ENCODE measurements at regions of chr2 and their contacts with region 1.

Region 1: GRCh38 chr2:184993746-184994145 is 395.4 kb downstream of the ZNF804A start:
- DNase-seq: no peak
- H3K4me3 Mint-ChIP-seq: no peak overlapping the region
- H3K27ac Mint-ChIP-seq: no peak overlapping the region
- H3K4me1 Mint-ChIP-seq: no peaks in the 10 kb centered on the region
- H3K27me3 Mint-ChIP-seq: no peaks in the 10 kb centered on the region
- CTCF ChIP-seq: no peak

Region 2: GRCh38 chr2:183604065-183604464 is 1389.7 kb before region 1 on chr2:
- CTCF ChIA-PET with region 1: no interaction called
- intact Hi-C with region 1: no loop called
- DNase-seq: no peak
- H3K4me3 Mint-ChIP-seq: no peak overlapping the region
- H3K27ac Mint-ChIP-seq: no peak overlapping the region
- H3K4me1 Mint-ChIP-seq: peaks cover 16% of the 10 kb centered on the region
- H3K27me3 Mint-ChIP-seq: no peaks in the 10 kb centered on the region
- CTCF ChIP-seq: no peak

Region 3: GRCh38 chr2:184154438-184154983 is 839.2 kb before region 1 on chr2:
- CTCF ChIA-PET with region 1: no interaction called
- intact Hi-C with region 1: no loop called
- DNase-seq: no peak
- H3K4me3 Mint-ChIP-seq: no peak overlapping the region
- H3K27ac Mint-ChIP-seq: no peak overlapping the region
- H3K4me1 Mint-ChIP-seq: no peaks in the 10 kb centered on the region
- H3K27me3 Mint-ChIP-seq: no peaks in the 10 kb centered on the region
- CTCF ChIP-seq: no peak

Region 4: DNA sequence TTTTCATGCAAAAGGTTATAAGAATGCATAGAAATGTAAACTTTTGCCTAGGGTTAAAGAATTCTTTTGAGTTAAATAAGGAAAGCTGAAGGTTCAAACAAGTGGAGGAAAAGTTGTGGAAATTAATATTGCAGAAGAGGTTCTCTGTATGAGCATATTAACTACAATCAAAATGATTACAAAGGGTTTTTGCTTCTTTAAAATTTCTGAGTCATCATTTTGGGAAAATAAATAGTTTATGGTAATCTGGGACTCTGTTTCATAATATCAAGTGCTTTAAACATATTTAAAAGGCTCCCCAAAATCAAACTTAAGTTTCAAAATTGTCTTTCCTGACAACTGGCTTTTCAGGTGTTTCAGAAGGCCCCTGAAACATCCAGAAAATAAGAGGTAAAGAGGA is 20.3 kb after region 1 on chr2:
- CTCF ChIA-PET with region 1: no interaction called
- intact Hi-C with region 1: loop called (anchors 2 kb)
- DNase-seq: no peak
- H3K4me3 Mint-ChIP-seq: no peak overlapping the region
- H3K27ac Mint-ChIP-seq: no peak overlapping the region
- H3K4me1 Mint-ChIP-seq: no peaks in the 10 kb centered on the region
- H3K27me3 Mint-ChIP-seq: no peaks in the 10 kb centered on the region
- CTCF ChIP-seq: no peak